Activated CD8-positive, alpha-beta T cell treated with anti-CD3 and anti-CD28 coated beads for 36 hours (primary cell): ENCODE measurements at regions of chr20 and their contacts with region 1.

Region 1: DNA sequence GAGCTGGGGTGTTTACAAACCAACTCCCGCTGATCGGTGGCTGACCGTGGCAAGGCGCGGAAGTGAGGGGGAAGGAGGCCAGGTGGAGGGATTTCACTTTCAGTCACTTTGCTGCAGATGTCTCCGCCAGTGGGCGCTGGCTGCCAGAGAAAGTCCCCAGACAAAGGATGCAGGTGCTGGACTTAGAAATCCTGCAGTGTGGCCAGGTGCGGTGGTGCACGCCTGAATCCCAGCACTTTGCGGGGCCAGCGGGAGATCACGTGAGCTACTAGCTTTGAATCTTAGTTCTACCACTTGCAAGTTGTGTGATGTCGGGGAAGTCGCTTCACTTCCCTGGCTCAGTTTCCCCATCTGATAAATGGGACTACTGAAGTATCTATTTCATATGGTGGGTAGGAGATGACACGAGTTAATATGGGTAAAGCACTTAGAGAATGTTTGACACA is 180.4 kb downstream of the ZNF217 start:
- DNase-seq: peak; percentile 79
- ATAC-seq: peak; percentile 72
- H3K4me3 Mint-ChIP-seq: no peak overlapping the region
- H3K27ac Mint-ChIP-seq: no peak overlapping the region
- H3K4me1 Mint-ChIP-seq: peaks cover 6% of the 10 kb centered on the region
- H3K27me3 Mint-ChIP-seq: no peaks in the 10 kb centered on the region
- CTCF ChIP-seq: peak; percentile 65

Region 2: GRCh38 chr20:53390770-53391169 is 22.4 kb before region 1 on chr20:
- CTCF ChIA-PET with region 1: no interaction called
- POLR2A ChIA-PET with region 1: no interaction called
- intact Hi-C with region 1: no loop called
- DNase-seq: no peak
- ATAC-seq: no peak
- H3K4me3 Mint-ChIP-seq: no peak overlapping the region
- H3K27ac Mint-ChIP-seq: no peak overlapping the region
- H3K4me1 Mint-ChIP-seq: peaks cover 25% of the 10 kb centered on the region
- H3K27me3 Mint-ChIP-seq: peaks cover 2% of the 10 kb centered on the region
- CTCF ChIP-seq: no peak

Region 3: DNA sequence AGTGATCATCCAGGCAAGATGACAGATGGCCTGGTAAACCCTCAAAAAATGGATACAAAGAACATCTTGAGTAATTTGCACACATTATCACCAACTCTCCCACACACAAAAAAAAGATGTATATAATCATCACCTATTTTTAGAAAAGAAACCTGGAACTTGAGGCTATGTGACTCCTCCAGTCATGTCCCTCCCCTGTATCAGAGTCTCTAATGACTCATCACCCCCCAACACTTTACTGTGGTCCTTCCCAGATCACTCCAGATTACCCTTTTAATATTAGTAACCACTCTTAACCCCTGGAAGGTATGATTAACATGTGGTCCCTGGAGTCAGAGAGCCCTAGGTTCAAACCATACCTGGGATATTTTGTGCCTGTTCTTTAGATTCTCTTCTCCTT is 35.7 kb after region 1 on chr20:
- CTCF ChIA-PET with region 1: no interaction called
- POLR2A ChIA-PET with region 1: no interaction called
- intact Hi-C with region 1: no loop called
- DNase-seq: no peak
- ATAC-seq: no peak
- H3K4me3 Mint-ChIP-seq: no peak overlapping the region
- H3K27ac Mint-ChIP-seq: no peak overlapping the region
- H3K4me1 Mint-ChIP-seq: no peaks in the 10 kb centered on the region
- H3K27me3 Mint-ChIP-seq: no peaks in the 10 kb centered on the region
- CTCF ChIP-seq: no peak

Region 4: DNA sequence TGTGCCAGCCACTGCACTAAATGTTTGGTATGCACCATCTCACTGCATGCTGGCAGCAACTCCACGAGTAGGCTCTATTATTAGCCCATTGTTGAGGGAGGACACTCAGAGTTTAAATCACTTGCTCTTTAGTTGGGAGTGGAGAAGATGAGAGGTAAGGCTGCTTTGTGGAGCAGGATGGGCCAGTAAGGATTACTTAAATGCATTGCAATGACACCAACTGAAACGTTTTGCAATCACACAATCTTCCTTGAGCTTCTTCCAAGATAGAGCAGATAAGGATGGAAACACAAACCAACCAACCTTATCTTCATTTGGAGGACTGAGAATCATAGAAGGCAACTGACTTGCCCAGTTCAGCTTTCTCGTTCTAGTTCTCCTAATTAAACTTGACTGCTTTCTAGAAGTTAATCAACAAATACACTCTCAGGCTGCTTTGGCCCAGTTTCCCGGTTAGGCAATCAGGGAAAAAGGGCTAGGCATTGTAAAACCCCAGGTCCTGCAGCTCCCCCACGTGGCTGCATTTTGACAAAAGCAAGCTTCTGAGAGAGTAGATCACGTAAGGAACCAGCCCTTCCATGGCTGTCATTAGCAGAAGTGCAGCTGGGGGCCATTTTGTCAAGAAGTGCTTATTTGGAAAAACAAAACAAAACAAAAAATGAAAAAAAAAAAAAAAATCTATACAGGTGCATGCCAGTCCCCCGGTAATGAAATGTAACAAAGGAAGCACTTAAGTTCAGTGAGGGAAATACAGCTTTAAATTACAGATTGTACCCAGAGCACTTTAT is 526.6 kb after region 1 on chr20:
- CTCF ChIA-PET with region 1: interaction called, 7 read pairs
- POLR2A ChIA-PET with region 1: no interaction called
- intact Hi-C with region 1: loop called (anchors 10 kb)
- DNase-seq: peak; percentile 92
- ATAC-seq: peak; percentile 84
- H3K4me3 Mint-ChIP-seq: no peak overlapping the region
- H3K27ac Mint-ChIP-seq: peak overlapping the region; percentile 22
- H3K4me1 Mint-ChIP-seq: peaks cover 45% of the 10 kb centered on the region
- H3K27me3 Mint-ChIP-seq: no peaks in the 10 kb centered on the region
- CTCF ChIP-seq: peak; percentile 85